Posterior cingulate gyrus (tissue), 11 donors: ENCODE measurements at regions of chr13 and their contacts with region 1.

Region 1: DNA sequence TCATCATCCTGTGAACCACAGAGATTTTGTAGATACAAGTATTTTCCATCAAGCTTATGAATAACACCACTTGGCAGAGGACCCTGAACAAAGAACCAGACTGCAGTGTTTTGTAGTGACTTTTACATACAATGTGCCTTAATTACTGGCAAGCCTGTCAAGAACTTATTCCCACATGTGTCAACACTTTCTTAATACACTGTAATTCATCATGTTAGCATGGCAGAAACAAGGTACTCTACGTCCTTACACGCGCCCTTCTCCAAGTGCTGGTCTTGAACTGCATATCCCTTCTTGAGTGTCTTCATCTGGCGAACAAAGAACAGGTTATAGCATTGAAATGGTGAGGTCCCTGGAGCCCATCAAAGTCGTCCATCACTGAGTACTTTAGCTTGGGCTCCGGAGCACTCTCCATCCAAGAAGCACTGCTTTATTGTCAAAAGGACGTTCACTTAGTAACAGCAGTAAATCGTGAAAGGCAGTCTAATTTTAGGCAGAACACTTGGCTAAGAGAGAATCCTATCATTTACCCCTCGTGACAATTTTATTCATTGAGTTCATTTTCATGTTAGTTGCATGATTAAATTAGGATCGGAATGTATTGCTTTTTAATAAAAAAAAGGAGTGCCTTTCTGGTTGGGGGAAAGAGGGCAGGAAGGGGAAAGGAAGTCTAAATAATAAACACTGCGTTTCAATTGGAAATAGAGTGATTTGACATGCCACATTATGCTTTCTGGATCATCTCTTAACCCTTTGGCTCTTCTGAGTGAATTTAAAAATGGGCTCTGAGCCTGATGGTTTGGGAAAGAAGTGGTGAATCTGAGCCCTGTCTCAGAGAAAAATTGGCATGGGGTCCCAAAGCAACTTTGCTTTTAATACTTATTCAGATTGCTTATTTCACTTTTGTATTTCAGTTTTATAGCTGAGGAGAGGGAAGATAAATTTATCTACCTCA is 376.1 kb downstream of the DLEU7 start:
- DNase-seq: no peak

Region 2: GRCh38 chr13:50410921-50411712 is 56.3 kb before region 1 on chr13:
- intact Hi-C with region 1: loop called (anchors 10 kb)
- DNase-seq: no peak